ENCODE measurements at regions of chr15 and their contacts with region 1.

Region 1: DNA sequence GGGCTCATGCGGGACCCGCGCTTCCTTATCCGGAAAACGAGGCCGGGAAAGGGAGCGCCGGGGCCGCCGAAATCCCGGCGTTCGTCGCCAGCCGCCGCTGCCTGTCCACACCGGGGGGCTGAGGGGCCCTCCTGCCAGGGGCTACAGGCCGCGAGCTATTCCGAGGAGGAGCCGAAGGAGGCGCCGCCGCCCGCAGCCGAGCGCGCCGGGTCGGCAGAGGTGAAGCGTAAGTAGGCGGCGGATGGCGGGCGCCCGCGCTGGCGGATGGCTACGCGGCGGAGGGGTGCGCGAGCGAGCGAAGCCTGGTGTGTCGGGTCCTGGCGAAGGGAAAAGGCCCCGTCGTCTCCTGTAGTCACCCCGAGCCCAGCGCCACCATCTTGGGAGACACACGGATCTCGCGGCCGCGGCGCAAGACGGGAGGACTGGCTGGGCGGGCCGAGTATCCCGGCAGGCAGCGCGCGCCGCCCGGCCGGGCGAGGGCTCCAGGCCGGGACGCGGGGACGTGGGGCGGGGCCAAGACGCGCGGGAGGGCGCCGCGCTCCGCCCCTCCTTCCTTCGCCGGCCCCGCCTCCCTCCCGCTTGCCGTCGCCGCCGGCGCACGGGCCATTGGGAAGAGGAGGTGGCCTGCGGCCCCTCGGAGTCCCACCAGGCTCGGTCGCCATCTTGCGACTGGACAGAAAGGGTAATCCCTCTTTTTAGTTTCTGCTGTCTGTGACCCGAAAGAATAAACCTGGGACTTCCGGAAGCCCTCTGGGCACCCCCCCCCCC is at the start of gene UBE3A:
- DNase-seq: peak; percentile 94
- ATAC-seq: peak; percentile 92
- H3K4me3 ChIP-seq: peak within 1 kb of the TSS; percentile 49 to 91 (median 86)
- H3K4me3 Mint-ChIP-seq: peak within 1 kb of the TSS; percentile 93
- H3K27ac ChIP-seq: peak within 1 kb of the TSS; percentile 87 to 96
- H3K27ac Mint-ChIP-seq: peak within 1 kb of the TSS; percentile 96
- H3K4me1 ChIP-seq: peaks cover 22 to 36% of the 10 kb centered on the region in 2 donors
- H3K4me1 Mint-ChIP-seq: peaks cover 38% of the 10 kb centered on the region
- H3K27me3 ChIP-seq: no peaks in the 10 kb centered on the region
- H3K27me3 Mint-ChIP-seq: no peaks in the 10 kb centered on the region
- CTCF ChIP-seq: peak; percentile 43
- total RNA-seq, gene UBE3A: 134 and 135 TPM in 2 replicates

Region 2: DNA sequence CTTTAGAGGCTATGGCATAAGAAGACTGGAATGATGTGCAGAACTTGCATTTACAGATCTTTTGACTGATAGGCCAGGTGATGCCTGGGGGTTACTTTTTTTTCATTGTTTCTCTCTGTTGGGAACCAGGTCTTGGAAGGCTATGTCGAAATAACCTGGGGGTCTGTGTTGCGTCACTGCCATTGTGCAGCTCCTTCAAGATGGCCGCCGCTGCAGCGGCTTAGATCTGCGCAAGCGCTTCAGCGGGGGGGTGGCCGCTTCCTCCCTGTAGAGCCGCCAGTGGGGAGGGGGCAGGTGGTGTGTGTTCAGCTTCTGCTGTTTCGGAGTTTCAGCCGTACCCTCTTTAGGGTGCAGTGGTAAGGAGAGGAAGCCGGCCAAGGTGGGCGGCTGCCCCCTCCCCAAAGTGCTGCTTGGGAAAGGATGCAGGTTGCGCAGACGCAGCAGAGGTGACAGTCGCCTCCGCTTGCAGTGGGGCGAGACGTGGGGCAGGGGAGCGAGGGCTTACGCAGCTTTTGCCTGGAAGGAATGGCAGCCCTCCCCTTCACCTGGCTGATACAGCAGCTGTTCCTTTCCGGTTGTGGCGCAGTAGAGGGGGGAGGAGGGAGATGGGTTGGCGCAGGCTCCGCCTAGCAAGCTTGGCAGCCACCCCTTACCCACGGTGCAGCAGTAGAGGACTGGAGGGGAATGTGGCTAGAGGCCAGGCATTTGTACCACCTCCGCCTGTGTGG is 482.5 kb before region 1 on chr15:
- CTCF ChIA-PET with region 1: no interaction called
- POLR2A ChIA-PET with region 1: interaction called, 7 read pairs
- intact Hi-C with region 1: loop called (anchors 1 kb)
- DNase-seq: peak; percentile 78
- ATAC-seq: peak; percentile 71
- H3K4me3 ChIP-seq: peak overlapping the region; percentile 78 to 93 (median 81)
- H3K4me3 Mint-ChIP-seq: peak overlapping the region; percentile 90
- H3K27ac ChIP-seq: peak overlapping the region; percentile 74
- H3K27ac Mint-ChIP-seq: peak overlapping the region; percentile 95
- H3K4me1 ChIP-seq: peaks cover 11 to 18% of the 10 kb centered on the region in 2 donors
- H3K4me1 Mint-ChIP-seq: peaks cover 31% of the 10 kb centered on the region
- H3K27me3 ChIP-seq: no peaks in the 10 kb centered on the region
- H3K27me3 Mint-ChIP-seq: no peaks in the 10 kb centered on the region
- CTCF ChIP-seq: no peak

Region 3: GRCh38 chr15:25385986-25386385 is 52.8 kb before region 1 on chr15:
- CTCF ChIA-PET with region 1: no interaction called
- POLR2A ChIA-PET with region 1: no interaction called
- intact Hi-C with region 1: loop called (anchors 10 kb)
- DNase-seq: no peak
- ATAC-seq: no peak
- H3K4me3 ChIP-seq: no peak overlapping the region
- H3K4me3 Mint-ChIP-seq: no peak overlapping the region
- H3K27ac ChIP-seq: no peak overlapping the region
- H3K27ac Mint-ChIP-seq: no peak overlapping the region
- H3K4me1 ChIP-seq: no peaks in the 10 kb centered on the region
- H3K4me1 Mint-ChIP-seq: peaks cover 11% of the 10 kb centered on the region
- H3K27me3 ChIP-seq: no peaks in the 10 kb centered on the region
- H3K27me3 Mint-ChIP-seq: no peaks in the 10 kb centered on the region
- CTCF ChIP-seq: no peak

Region 4: DNA sequence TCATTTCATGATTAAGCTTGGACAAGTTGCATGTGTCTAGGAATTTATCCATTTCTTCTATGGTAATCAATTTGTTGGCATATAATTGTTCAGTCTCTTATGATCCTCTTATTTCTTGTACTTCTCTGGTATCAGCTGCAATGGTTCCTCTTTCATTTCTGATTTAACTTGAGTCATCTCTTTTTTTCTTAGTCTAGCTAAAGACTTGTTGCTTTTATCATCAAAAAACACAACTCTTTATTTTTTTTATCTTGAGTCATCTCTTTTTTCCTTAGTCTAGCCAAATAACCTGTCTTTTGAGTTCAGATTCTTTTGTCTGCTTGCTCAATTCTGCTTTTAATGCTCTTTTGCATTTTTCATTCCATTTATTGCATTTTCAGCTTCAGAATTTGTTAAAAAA is 37.3 kb before region 1 on chr15:
- CTCF ChIA-PET with region 1: interaction called, 3 read pairs
- POLR2A ChIA-PET with region 1: no interaction called
- intact Hi-C with region 1: loop called (anchors 5 kb)
- DNase-seq: no peak
- ATAC-seq: no peak
- H3K4me3 ChIP-seq: no peak overlapping the region
- H3K4me3 Mint-ChIP-seq: no peak overlapping the region
- H3K27ac ChIP-seq: no peak overlapping the region
- H3K27ac Mint-ChIP-seq: no peak overlapping the region
- H3K4me1 ChIP-seq: peaks cover 12 to 13% of the 10 kb centered on the region in 2 donors
- H3K4me1 Mint-ChIP-seq: peaks cover 48% of the 10 kb centered on the region
- H3K27me3 ChIP-seq: no peaks in the 10 kb centered on the region
- H3K27me3 Mint-ChIP-seq: no peaks in the 10 kb centered on the region
- CTCF ChIP-seq: no peak